H1 (cell line): ENCODE measurements at regions of chr12 and their contacts with region 1.

Region 1: GRCh38 chr12:52221912-52222457 is 11.1 kb upstream of the KRT7 start:
- DNase-seq: peak; percentile 44 to 96
- H3K4me3 ChIP-seq: no peak overlapping the region
- H3K27ac ChIP-seq: no peak overlapping the region
- H3K4me1 ChIP-seq: peaks cover 0 to 2% (median under 1%) of the 10 kb centered on the region in 4 experiments; a peak in 2 of 7 replicates
- H3K27me3 ChIP-seq: no peaks in the 10 kb centered on the region; a peak in 2 of 7 replicates
- CTCF ChIP-seq: peak; percentile 93 to 98 (median 95)
- EP300 ChIP-seq: no peak
- POLR2A ChIP-seq: no peak
- RAD21 ChIP-seq: peak; percentile 72 to 84

Region 2: DNA sequence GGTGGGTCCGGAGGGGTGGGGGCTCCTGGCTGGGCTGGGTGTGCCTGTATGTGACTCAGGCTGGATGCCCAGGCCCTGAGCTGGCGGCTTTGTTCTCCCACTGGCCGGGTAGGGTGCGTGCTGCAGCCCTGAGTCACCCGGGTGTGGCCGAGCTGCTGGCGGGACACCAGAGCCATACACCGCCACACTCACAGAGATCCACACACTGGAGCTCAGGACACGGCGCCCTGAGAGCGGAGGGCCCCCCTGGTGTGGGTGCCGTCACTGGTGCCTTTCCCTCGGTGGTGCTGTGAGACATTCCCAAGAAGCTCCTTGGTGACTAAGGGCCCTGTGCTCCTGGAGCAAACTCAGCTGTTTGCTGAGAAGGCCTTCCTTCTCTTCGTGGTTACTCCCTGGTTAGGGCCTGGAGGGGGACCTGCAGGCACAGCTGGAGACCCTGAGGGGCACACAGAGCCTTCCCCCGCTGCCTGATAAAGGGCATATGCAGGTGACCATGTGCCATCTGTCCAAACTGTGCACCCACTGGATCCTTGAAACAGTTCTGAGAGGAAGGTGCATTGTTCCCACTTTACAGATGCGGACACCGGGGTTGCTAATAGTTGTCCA is 74.5 kb before region 1 on chr12:
- CTCF ChIA-PET with region 1: interaction called, 24 read pairs
- POLR2A ChIA-PET with region 1: no interaction called
- DNase-seq: no peak
- H3K4me3 ChIP-seq: no peak overlapping the region
- H3K27ac ChIP-seq: peak overlapping the region; percentile 73
- H3K4me1 ChIP-seq: peaks cover 8 to 44% (median 19%) of the 10 kb centered on the region in 4 experiments
- H3K27me3 ChIP-seq: no peaks in the 10 kb centered on the region; a peak in 1 of 7 replicates
- CTCF ChIP-seq: no peak
- EP300 ChIP-seq: no peak
- POLR2A ChIP-seq: no peak
- RAD21 ChIP-seq: no peak

Region 3: DNA sequence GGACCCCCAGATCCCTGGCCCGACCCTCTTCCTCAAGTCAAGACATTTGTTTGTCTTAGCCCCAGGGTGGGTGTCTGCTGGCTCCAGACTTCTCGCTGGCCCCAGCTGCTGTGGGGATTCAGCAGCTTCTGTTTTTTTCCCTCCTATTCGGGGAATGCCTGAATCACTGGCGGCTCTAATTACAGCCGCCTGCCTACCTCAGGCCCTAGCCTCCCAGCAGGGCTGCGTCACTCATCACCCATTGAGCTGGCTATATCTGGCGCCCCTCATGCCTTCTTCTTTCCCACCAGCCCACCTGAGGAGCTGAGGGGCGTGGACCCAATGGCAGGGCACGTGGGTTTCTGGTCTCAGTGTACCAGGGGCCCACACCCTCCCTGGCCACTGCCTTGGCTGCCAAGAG is 40.2 kb before region 1 on chr12:
- CTCF ChIA-PET with region 1: interaction called, 39 read pairs
- POLR2A ChIA-PET with region 1: no interaction called
- DNase-seq: no peak
- H3K4me3 ChIP-seq: no peak overlapping the region
- H3K27ac ChIP-seq: no peak overlapping the region
- H3K4me1 ChIP-seq: peaks cover 3 to 29% (median 22%) of the 10 kb centered on the region in 4 experiments
- H3K27me3 ChIP-seq: no peaks in the 10 kb centered on the region; a peak in 1 of 7 replicates
- CTCF ChIP-seq: no peak
- EP300 ChIP-seq: no peak
- POLR2A ChIP-seq: no peak
- RAD21 ChIP-seq: no peak

Region 4: DNA sequence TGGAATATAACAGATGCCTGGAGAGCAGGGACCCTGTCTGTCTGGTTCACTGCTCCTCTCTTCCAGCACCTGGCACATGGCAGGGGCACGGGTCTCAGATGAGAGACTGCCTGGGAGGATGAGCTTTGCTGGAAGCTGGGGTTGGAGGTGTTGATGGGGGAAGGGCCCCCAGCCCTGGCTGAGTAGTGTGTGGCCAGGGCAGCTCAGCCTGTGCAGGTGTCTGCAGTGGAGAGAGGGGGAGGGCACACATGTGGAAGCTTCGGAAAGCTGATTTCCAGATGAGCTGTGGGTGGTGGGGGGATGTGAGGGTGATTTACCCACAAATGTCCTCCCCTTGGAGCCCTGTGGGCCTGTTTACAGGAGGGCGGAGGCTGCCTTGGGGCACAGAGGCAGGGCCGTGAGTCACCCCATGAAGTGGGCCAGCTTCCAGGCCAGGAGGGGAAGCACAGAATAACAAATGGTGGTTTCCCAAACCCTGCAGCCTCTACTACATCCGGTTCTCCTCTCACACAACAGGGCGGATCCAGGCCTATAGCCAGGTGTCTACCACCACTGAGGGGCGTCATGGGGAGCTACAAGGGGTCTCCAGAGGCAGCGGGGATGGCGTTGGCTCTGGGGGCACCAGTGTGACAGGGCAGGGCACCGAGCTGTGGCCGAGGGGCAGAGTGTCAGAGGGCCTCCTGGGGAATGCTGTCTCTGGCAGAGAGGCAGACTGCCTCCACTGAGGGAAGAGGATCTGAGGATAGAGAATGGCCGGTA is 22.1 kb after region 1 on chr12:
- CTCF ChIA-PET with region 1: interaction called, 146 read pairs
- POLR2A ChIA-PET with region 1: interaction called, 3 read pairs
- DNase-seq: no peak
- H3K4me3 ChIP-seq: no peak overlapping the region
- H3K27ac ChIP-seq: no peak overlapping the region
- H3K4me1 ChIP-seq: peaks cover 0 to 9% (median 5%) of the 10 kb centered on the region in 4 experiments; a peak in 3 of 7 replicates
- H3K27me3 ChIP-seq: peaks cover 0 to 6% (median 3%) of the 10 kb centered on the region in 4 experiments; a peak in 4 of 7 replicates
- CTCF ChIP-seq: no peak
- EP300 ChIP-seq: no peak
- POLR2A ChIP-seq: no peak
- RAD21 ChIP-seq: no peak

Region 5: GRCh38 chr12:52285172-52285745 is 63.3 kb after region 1 on chr12:
- CTCF ChIA-PET with region 1: interaction called, 81 read pairs
- POLR2A ChIA-PET with region 1: no interaction called
- DNase-seq: no peak
- H3K4me3 ChIP-seq: no peak overlapping the region
- H3K27ac ChIP-seq: no peak overlapping the region
- H3K4me1 ChIP-seq: peaks cover 0 to 2% (median 0%) of the 10 kb centered on the region in 4 experiments; a peak in 1 of 7 replicates
- H3K27me3 ChIP-seq: no peaks in the 10 kb centered on the region
- CTCF ChIP-seq: no peak
- EP300 ChIP-seq: no peak
- POLR2A ChIP-seq: no peak
- RAD21 ChIP-seq: no peak

Region 6: GRCh38 chr12:52319097-52319496 is 97.1 kb after region 1 on chr12:
- CTCF ChIA-PET with region 1: interaction called, 82 read pairs
- POLR2A ChIA-PET with region 1: no interaction called
- DNase-seq: no peak
- H3K4me3 ChIP-seq: no peak overlapping the region
- H3K27ac ChIP-seq: no peak overlapping the region
- H3K4me1 ChIP-seq: no peaks in the 10 kb centered on the region
- H3K27me3 ChIP-seq: no peaks in the 10 kb centered on the region
- CTCF ChIP-seq: peak; percentile 4 to 40 (median 18)
- EP300 ChIP-seq: no peak
- POLR2A ChIP-seq: no peak
- RAD21 ChIP-seq: peak; percentile 23 to 53; a peak in 3 of 4 replicates

Region 7: DNA sequence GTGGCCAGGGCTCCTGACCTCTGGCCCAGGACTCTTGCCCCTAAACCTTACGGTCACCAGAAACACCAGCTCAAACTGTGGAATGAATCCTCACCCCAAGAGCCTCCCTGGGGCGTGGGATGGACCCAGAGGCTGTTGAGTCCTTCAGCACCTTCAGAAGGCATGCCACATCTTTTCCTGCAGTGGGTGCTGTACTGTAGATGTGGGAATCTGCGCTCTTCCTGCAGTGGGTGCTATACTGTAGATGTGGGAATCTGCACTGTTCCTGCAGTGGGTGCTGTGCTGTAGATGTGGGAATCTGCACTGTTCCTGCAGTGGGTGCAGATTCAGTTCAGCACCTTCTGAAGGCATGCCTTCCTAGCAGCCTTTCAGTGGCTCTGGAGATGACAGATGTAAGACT is 183.0 kb after region 1 on chr12:
- CTCF ChIA-PET with region 1: no interaction called
- POLR2A ChIA-PET with region 1: no interaction called
- DNase-seq: no peak
- H3K4me3 ChIP-seq: no peak overlapping the region
- H3K27ac ChIP-seq: no peak overlapping the region
- H3K4me1 ChIP-seq: peaks cover 0 to 5% (median under 1%) of the 10 kb centered on the region in 4 experiments; a peak in 1 of 7 replicates
- H3K27me3 ChIP-seq: no peaks in the 10 kb centered on the region; a peak in 1 of 7 replicates
- CTCF ChIP-seq: no peak; a peak in 1 of 4 replicates
- EP300 ChIP-seq: no peak
- POLR2A ChIP-seq: no peak
- RAD21 ChIP-seq: no peak